ENCODE measurements at regions of chr6 and their contacts with region 1.

Region 1: GRCh38 chr6:112311950-112312547 is 35.1 kb upstream of the RFPL4B start:
- DNase-seq: peak; percentile 61

Region 2: GRCh38 chr6:112180095-112180820 is 131.8 kb before region 1 on chr6:
- in situ Hi-C with region 1: loop called (anchors 25 kb)
- DNase-seq: peak; percentile 37

Measured in KBM-7 (cell line).